Heart right ventricle (tissue), 16 donors: ENCODE measurements at regions of chr10 and their contacts with region 1.

Region 1: GRCh38 chr10:24513155-24513554 is 210.5 kb downstream of the ARHGAP21 start:
- DNase-seq: no peak
- ATAC-seq: no peak
- H3K4me3 ChIP-seq: no peak overlapping the region
- H3K27ac ChIP-seq: no peak overlapping the region
- H3K4me1 ChIP-seq: no peaks in the 10 kb centered on the region
- H3K27me3 ChIP-seq: no peaks in the 10 kb centered on the region
- CTCF ChIP-seq: peak in 6 of 9 donors; percentile 14 to 39 (median 24)

Region 2: DNA sequence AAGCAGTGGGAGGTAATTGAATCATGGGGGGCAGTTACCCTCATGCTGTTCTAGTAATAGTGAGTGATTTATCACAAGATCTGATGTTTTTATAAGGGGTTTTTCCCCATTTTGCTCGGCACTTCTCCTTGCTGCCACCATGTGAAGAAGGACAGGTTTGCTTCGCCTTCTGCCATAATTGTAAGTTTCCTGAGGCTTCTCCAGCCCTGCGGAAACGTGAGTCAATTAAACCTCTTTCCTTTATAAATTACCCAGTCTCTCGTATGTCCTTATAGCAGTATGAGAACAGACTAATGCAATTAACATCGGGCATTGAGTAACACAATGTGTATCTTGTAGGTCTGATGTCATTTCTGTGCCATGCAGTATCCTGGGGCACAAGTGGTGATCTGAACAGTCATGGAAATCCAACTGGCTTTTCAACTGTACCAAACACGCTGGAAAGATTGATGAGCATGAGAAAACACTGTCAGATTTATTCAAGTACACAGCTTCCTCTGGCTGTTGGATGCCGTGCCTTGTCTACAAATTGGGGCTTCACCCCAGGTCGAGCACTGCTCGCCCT is 512.8 kb before region 1 on chr10:
- intact Hi-C with region 1: loop called in 7 of 10 experiments (anchors 2 to 10 kb)
- DNase-seq: no peak
- ATAC-seq: no peak
- H3K4me3 ChIP-seq: no peak overlapping the region
- H3K27ac ChIP-seq: no peak overlapping the region
- H3K4me1 ChIP-seq: no peaks in the 10 kb centered on the region
- H3K27me3 ChIP-seq: no peaks in the 10 kb centered on the region
- CTCF ChIP-seq: no peak